ENCODE measurements at regions of chr14 and their contacts with region 1.

Region 1: GRCh38 chr14:81453166-81453766 is 53.1 kb upstream of the STON2 start:
- DNase-seq: no peak
- H3K4me3 ChIP-seq: no peak overlapping the region
- H3K27me3 ChIP-seq: peaks cover 8% of the 10 kb centered on the region
- CTCF ChIP-seq: peak; percentile 83

Region 2: DNA sequence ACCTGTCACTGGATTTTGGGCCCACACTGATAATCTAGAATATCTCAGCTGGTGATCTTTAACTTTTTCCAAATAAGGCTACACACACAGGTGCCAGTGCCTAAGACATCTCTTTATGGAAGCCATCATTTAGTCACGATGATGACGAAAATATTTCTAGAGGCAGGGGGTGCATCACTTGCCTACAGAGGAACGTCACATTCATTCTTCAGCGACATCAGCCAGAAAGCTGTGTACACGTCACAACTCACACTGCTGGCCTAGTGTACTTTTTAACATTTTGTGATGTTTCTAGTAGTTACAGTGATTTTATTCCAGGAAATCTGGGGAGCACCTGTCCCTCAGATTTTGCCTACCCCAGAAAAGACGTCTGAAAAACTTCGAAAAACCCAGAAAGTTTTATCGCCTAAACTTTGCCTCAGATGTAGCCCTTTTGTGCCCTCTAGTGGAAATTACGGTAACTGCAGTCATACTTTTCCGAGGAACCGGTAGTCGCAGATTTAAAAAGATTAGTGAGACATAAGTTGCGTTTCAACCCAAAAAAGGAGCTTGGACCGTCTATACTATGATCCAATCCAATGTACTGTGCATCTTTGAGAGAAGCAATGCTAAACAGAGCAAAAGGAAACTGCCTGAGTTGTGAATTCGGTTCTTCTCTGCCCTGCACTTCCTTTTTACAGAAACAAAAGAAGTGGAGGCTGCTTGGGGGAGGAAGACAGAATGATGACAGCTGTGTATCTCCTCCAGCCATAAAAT is 11.2 kb after region 1 on chr14:
- CTCF ChIA-PET with region 1: interaction called, 56 read pairs
- POLR2A ChIA-PET with region 1: no interaction called
- DNase-seq: peak; percentile 19
- H3K4me3 ChIP-seq: peak overlapping the region; percentile 49
- H3K27me3 ChIP-seq: no peaks in the 10 kb centered on the region
- CTCF ChIP-seq: peak; percentile 84

Region 3: GRCh38 chr14:81533536-81534343 is 80.5 kb after region 1 on chr14 and contains the start of gene SEL1L:
- CTCF ChIA-PET with region 1: no interaction called
- POLR2A ChIA-PET with region 1: no interaction called
- DNase-seq: peak; percentile 99
- H3K4me3 ChIP-seq: peak within 1 kb of the TSS; percentile 80
- H3K27me3 ChIP-seq: no peaks in the 10 kb centered on the region
- CTCF ChIP-seq: no peak
- polyA plus RNA-seq, gene SEL1L: 21.7 and 35.5 TPM in 2 replicates

Measured in BJ (cell line).